ENCODE measurements at regions of chr1 and their contacts with region 1.

Region 1: DNA sequence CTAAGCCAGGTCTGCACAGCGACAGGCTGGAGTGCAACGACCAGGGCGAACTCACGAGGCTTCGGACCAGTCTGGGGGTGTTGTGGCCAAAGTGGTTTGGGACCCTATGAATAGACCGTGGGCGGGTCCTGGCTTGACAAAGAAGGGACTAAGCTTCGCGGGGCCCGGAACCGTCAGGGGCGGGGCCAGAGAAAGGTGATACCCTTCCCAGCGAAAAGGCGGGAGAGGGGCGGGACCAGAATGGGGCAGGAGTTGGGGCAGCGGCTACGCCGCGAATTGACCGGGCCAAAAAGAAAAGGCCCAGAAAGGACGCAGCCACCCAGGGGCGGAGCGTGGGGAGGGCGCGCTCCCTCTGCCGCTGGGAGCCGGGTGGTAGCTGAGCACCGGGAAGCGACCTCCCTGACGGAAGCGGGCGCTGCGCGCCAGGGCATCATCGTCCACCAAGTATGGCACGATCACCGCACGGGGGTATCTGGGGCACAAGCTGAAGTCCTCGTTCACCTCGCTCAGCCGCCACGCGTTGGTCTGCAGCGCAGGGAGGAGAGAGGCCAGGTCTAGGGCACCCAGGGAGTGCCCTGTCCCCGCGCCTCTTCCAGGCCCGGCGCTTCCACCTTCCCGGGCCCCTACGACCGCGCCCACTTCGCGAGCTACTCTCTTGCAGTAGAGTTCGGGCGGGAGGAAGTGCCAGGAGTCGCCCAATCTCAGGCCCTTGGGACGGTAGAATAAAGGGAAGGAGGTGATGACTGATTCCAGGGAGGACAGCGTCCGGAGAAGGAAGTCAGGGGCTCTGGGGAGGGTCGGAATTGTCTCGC is 6.7 kb upstream of the FAM167B start:
- DNase-seq: peak; percentile 53 to 75
- ATAC-seq: peak; percentile 76 to 85
- H3K4me3 ChIP-seq: peak overlapping the region; percentile 56
- H3K27ac ChIP-seq: peak overlapping the region; percentile 79 to 94
- H3K4me1 ChIP-seq: peaks cover 41% of the 10 kb centered on the region
- CTCF ChIP-seq: peak; percentile 36
- EP300 ChIP-seq: no peak
- POLR2A ChIP-seq: peak; percentile 71
- RAD21 ChIP-seq: peak; percentile 6 to 37; a peak in 2 of 5 replicates

Region 2: DNA sequence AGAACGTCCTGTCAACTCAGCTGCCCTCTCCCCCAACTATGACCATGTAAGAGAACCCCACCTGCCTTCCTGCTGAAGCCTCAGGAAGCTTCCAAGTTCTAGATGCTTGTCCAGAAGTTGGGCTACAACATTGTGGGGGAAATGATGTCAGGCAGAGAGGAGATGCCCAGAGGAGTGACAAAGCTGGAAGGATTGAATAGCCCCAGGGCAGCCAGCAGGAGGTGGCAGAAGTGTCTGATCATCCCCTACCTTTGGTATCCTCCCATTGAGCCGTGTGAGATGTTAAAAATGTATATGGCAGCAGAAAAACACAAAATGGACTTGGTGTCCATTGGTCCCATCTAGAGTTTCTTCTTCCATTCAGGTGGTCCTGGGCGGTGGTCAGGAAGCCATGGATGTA is 11.6 kb before region 1 on chr1:
- CTCF ChIA-PET with region 1: interaction called, 17 read pairs
- POLR2A ChIA-PET with region 1: interaction called, 5 read pairs
- DNase-seq: no peak
- ATAC-seq: no peak
- H3K4me3 ChIP-seq: no peak overlapping the region
- H3K27ac ChIP-seq: no peak overlapping the region
- H3K4me1 ChIP-seq: peaks cover 4% of the 10 kb centered on the region; the same call in 2 of the 3 replicates
- CTCF ChIP-seq: no peak
- EP300 ChIP-seq: no peak
- POLR2A ChIP-seq: no peak
- RAD21 ChIP-seq: no peak

Region 3: DNA sequence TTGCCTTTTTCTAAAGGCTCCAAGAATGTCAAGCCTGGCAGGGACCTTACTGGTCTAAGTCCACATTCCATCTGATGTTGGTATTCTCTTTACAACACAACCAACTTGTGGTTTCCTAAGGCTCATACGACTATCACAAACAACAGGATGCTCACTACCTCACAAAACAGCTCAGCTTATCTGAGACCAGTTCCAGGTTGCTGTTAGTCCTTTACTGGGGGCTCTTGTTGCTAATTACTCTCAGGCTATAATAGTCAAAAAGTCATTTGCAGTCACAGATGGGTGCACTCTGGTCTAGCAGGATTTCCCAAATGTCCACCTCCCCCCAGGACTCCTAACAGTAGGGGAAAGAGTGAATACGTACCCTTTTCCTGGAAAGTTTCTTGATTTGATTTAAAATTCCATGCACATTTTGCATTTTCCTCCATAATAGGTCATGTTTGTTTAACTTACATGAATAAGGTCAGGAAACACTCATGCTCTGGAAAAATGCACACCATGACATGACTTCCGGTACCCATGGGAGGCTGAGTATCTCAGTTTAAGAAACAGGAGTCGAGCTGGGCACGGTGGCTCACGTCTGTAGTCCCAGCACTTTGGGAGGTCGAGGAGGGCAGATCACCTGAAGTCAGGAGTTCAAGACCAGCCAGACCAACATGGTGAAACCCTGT is 26.7 kb after region 1 on chr1:
- CTCF ChIA-PET with region 1: no interaction called
- POLR2A ChIA-PET with region 1: no interaction called
- DNase-seq: no peak
- ATAC-seq: no peak
- H3K4me3 ChIP-seq: no peak overlapping the region
- H3K27ac ChIP-seq: no peak overlapping the region
- H3K4me1 ChIP-seq: peaks cover 7% of the 10 kb centered on the region; the same call in 2 of the 3 replicates
- CTCF ChIP-seq: no peak
- EP300 ChIP-seq: no peak
- POLR2A ChIP-seq: no peak
- RAD21 ChIP-seq: no peak

Region 4: GRCh38 chr1:32291708-32292492 is 51.6 kb after region 1 on chr1 and contains the start of gene HDAC1:
- CTCF ChIA-PET with region 1: interaction called, 9 read pairs
- POLR2A ChIA-PET with region 1: interaction called, 11 read pairs
- DNase-seq: peak; percentile 88 to 94
- ATAC-seq: peak; percentile 97 to 98
- H3K4me3 ChIP-seq: peak within 1 kb of the TSS; percentile 90
- H3K27ac ChIP-seq: peak within 1 kb of the TSS; percentile 92 to 95
- H3K4me1 ChIP-seq: peaks cover 22% of the 10 kb centered on the region
- CTCF ChIP-seq: no peak
- EP300 ChIP-seq: no peak
- POLR2A ChIP-seq: peak; percentile 69
- RAD21 ChIP-seq: no peak
- polyA plus RNA-seq, gene HDAC1: 135 TPM in 2 replicates

Measured in A549 (cell line).